Heart left ventricle (tissue), 16 donors: ENCODE measurements at regions of chr18 and their contacts with region 1.

Region 1: DNA sequence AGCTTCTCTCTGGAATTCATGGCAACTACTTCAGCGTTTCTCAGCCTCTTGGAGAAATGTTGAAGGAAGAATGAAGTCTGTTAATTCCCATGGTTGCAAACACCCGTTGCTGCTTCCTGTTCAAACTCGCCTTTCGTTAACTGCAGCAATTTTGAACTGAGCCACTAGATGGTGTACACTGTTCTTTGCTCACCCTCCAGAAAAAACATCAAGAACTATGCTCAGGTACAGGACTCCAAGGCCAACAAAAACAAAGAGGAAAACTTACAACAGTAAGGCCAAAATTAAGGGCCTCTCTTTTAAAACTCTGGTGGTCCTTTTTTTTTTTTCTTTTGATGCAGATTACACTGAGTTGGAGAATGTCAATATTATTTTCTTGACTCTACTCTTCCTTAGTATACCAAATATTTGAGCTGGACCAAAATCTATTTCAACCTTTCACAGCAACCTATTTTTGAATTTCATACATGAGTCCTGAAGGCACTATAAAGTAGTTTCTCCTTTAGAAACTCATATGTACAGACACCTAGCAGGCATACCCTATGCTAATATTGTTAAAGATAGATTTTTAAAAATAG is 58.2 kb downstream of the KLHL14 start:
- DNase-seq: peak in 1 of 5 donors; percentile 15
- ATAC-seq: peak in 3 of 4 donors; percentile 53 to 68 (median 63)
- H3K4me3 ChIP-seq: no peak overlapping the region
- H3K27ac ChIP-seq: no peak overlapping the region
- H3K4me1 ChIP-seq: peaks cover 0 to 3% (median 0%) of the 10 kb centered on the region in 12 donors
- H3K27me3 ChIP-seq: no peaks in the 10 kb centered on the region
- CTCF ChIP-seq: peak; percentile 41 to 69 (median 60)
- POLR2A ChIP-seq: no peak

Region 2: GRCh38 chr18:32595832-32596231 is 118.8 kb before region 1 on chr18:
- intact Hi-C with region 1: no loop called
- DNase-seq: no peak
- ATAC-seq: no peak
- H3K4me3 ChIP-seq: no peak overlapping the region
- H3K27ac ChIP-seq: no peak overlapping the region
- H3K4me1 ChIP-seq: no peaks in the 10 kb centered on the region
- H3K27me3 ChIP-seq: no peaks in the 10 kb centered on the region
- CTCF ChIP-seq: no peak
- POLR2A ChIP-seq: no peak

Region 3: DNA sequence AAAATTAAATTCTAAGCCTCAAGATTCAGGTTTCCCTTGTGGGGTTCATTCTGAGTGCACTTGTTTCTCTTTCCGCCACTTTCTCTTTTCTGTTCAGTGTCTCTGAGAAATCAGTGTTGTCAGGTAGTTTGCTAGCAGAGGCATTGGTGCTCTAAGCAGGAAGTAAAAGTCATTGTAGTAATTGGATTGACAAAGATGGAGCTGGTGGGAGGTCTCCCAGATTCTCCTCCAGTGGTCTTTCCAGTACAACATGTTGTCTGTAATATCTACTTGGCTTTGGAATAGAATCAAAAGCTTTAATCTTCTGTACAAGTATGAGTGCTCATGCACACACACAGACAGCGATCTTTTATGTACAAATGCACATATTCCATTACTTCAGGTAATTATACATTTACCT is 77.4 kb before region 1 on chr18:
- intact Hi-C with region 1: no loop called
- DNase-seq: no peak
- ATAC-seq: no peak
- H3K4me3 ChIP-seq: no peak overlapping the region
- H3K27ac ChIP-seq: no peak overlapping the region
- H3K4me1 ChIP-seq: no peaks in the 10 kb centered on the region
- H3K27me3 ChIP-seq: peaks cover 0 to 3% (median 0%) of the 10 kb centered on the region in 9 donors
- CTCF ChIP-seq: no peak
- POLR2A ChIP-seq: no peak

Region 4: DNA sequence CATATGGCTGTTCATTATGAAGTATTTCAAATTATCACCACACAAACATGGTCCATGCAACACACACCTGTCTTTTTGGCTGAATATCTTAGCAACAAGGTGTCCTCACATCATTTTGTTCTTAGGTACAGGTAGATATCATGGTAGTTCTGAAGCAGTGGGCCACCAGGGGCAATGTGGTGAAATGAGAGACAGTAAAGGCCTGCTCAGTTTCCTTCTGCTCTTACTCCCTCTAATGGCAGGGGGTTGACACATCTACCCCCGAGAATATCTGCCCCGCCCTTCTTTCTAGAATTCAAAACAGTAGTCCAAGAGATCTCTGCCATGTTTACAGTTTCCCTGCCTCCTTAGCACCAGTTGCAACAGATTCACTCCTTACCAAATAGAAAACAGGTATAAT is 205.1 kb after region 1 on chr18:
- intact Hi-C with region 1: loop called in 3 of 10 experiments (anchors 10 kb)
- DNase-seq: no peak
- ATAC-seq: no peak
- H3K4me3 ChIP-seq: no peak overlapping the region
- H3K27ac ChIP-seq: no peak overlapping the region
- H3K4me1 ChIP-seq: no peaks in the 10 kb centered on the region
- H3K27me3 ChIP-seq: no peaks in the 10 kb centered on the region
- CTCF ChIP-seq: peak in 4 of 12 donors; percentile 10 to 33 (median 20)
- POLR2A ChIP-seq: no peak